GM12878 (cell line): ENCODE measurements at regions of chrX and their contacts with region 1.

Region 1: GRCh38 chrX:15349046-15349445 is 13.7 kb upstream of the PIGA start:
- DNase-seq: no peak
- ATAC-seq: peak; percentile 93
- H3K4me3 ChIP-seq: no peak overlapping the region
- H3K27ac ChIP-seq: no peak overlapping the region
- H3K4me1 ChIP-seq: no peaks in the 10 kb centered on the region
- H3K27me3 ChIP-seq: no peaks in the 10 kb centered on the region
- CTCF ChIP-seq: peak; percentile 40 to 61 (median 43); a peak in 5 of 6 replicates
- EP300 ChIP-seq: no peak
- POLR2A ChIP-seq: no peak
- RAD21 ChIP-seq: peak; percentile 78

Region 2: DNA sequence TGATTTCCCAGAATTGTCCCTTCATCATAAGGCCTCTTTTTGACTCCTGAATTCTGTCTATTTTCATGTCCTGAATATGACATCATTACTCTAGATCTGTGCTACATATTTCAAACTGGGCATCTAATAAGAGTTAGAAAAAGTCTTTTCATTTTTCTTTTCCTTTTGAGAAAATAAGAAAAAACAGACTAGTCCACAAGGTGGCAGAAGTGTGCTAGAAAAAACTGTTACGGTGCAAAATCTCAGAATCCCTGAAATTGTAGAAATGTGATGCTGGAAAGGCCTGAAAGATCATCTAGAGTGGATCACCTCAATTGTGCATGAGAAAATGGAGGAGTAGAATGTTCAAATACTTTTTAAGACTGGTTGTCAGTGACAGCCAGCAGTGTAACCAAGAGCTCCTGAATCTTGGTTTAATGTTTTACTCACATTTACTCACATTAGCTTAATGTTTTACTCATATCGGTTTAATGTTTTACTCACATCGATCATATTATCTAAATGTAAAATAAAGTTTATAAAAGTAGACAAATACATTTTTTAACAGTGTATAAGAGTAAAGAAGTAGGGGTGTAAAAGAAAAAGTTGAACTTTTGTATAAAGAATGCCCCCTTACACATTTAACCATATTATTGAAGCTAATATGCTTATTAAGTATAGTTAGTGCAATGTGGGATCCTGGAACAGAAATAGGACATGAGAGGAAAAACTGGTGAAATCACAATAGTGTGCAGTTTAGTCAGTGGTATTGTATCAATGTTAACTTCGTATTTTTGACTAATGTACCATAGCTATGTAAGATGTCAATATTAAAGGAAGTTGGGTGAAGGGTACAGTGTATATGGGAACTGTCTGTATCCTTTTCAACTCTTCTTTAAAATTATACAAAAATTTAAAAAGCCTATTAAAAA is 48.9 kb before region 1 on chrX:
- CTCF ChIA-PET with region 1: interaction called, 10 read pairs
- POLR2A ChIA-PET with region 1: no interaction called
- RAD21 ChIA-PET with region 1: interaction called, 6 read pairs
- SMC1A ChIA-PET with region 1: interaction called, 6 read pairs
- in situ Hi-C with region 1: no loop called
- intact Hi-C with region 1: no loop called
- DNase-seq: no peak
- ATAC-seq: no peak; the same call in 2 of the 3 replicates
- H3K4me3 ChIP-seq: no peak overlapping the region
- H3K27ac ChIP-seq: no peak overlapping the region
- H3K4me1 ChIP-seq: no peaks in the 10 kb centered on the region
- H3K27me3 ChIP-seq: no peaks in the 10 kb centered on the region
- CTCF ChIP-seq: peak; percentile 39 to 40 (median 40); a peak in 4 of 6 replicates
- EP300 ChIP-seq: no peak
- POLR2A ChIP-seq: no peak
- RAD21 ChIP-seq: peak; percentile 32

Region 3: DNA sequence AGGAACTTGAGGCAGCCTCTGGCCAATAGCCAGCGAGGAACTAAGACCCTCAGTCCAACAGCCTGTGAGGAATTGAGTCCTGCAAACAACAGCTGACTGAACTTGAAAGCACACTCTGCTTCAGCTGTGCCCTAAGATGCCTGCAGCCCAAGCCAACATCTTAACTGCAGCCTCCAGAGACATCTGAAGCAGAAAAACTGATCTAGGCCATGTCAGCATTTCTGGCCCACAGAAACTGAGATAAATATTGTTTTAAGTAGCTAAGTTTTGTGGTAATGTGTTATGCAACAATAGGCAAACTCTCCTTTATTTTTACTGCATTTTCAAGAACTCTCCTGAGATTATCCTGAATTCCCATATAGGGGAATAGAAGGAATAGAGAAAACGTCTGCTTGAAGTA is 10.7 kb after region 1 on chrX:
- CTCF ChIA-PET with region 1: interaction called, 12 read pairs
- POLR2A ChIA-PET with region 1: no interaction called
- RAD21 ChIA-PET with region 1: no interaction called
- SMC1A ChIA-PET with region 1: interaction called, 6 read pairs
- in situ Hi-C with region 1: no loop called
- intact Hi-C with region 1: no loop called
- DNase-seq: no peak
- ATAC-seq: no peak
- H3K4me3 ChIP-seq: no peak overlapping the region
- H3K27ac ChIP-seq: no peak overlapping the region
- H3K4me1 ChIP-seq: no peaks in the 10 kb centered on the region
- H3K27me3 ChIP-seq: no peaks in the 10 kb centered on the region
- CTCF ChIP-seq: no peak
- EP300 ChIP-seq: no peak
- POLR2A ChIP-seq: no peak
- RAD21 ChIP-seq: no peak

Region 4: GRCh38 chrX:15471016-15471415 is 122.0 kb after region 1 on chrX:
- CTCF ChIA-PET with region 1: interaction called, 200 read pairs
- POLR2A ChIA-PET with region 1: no interaction called
- RAD21 ChIA-PET with region 1: interaction called, 71 read pairs
- SMC1A ChIA-PET with region 1: interaction called, 62 read pairs
- in situ Hi-C with region 1: loop called (anchors 5 kb)
- intact Hi-C with region 1: loop called (anchors 1 kb)
- DNase-seq: peak; percentile 27
- ATAC-seq: peak; percentile 95
- H3K4me3 ChIP-seq: no peak overlapping the region
- H3K27ac ChIP-seq: no peak overlapping the region
- H3K4me1 ChIP-seq: no peaks in the 10 kb centered on the region
- H3K27me3 ChIP-seq: no peaks in the 10 kb centered on the region; a peak in 1 of 4 replicates
- CTCF ChIP-seq: peak; percentile 84 to 91 (median 85)
- EP300 ChIP-seq: no peak
- POLR2A ChIP-seq: no peak
- RAD21 ChIP-seq: peak; percentile 77

Region 5: DNA sequence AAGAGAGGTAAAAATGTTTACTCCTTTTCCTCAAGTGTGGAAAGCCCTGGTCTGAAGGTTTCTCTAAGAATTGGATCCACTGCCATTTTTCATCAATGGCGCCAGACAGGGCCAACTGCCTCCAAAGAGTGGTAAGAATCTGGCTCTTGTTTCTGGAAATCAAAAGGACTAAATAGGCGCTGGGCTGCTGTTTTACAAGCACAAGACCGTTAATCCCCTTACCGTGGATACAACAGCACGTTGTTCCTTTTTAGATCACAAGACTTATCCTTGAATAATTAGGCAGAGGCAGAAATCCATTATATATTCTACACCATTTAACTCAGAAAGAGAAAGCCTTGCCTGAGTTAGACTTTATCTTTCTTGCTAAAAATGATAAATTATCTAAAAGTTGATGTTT is 304.9 kb after region 1 on chrX:
- CTCF ChIA-PET with region 1: no interaction called
- POLR2A ChIA-PET with region 1: no interaction called
- RAD21 ChIA-PET with region 1: interaction called, 3 read pairs
- SMC1A ChIA-PET with region 1: no interaction called
- in situ Hi-C with region 1: no loop called
- intact Hi-C with region 1: loop called (anchors 10 kb)
- DNase-seq: no peak
- ATAC-seq: no peak
- H3K4me3 ChIP-seq: no peak overlapping the region
- H3K27ac ChIP-seq: no peak overlapping the region
- H3K4me1 ChIP-seq: no peaks in the 10 kb centered on the region
- H3K27me3 ChIP-seq: no peaks in the 10 kb centered on the region; a peak in 2 of 4 replicates
- CTCF ChIP-seq: no peak
- EP300 ChIP-seq: no peak
- POLR2A ChIP-seq: no peak
- RAD21 ChIP-seq: no peak